Activated CD4-positive, alpha-beta T cell treated with anti-CD3 and anti-CD28 coated beads for 36 hours (primary cell): ENCODE measurements at regions of chr3 and their contacts with region 1.

Region 1: DNA sequence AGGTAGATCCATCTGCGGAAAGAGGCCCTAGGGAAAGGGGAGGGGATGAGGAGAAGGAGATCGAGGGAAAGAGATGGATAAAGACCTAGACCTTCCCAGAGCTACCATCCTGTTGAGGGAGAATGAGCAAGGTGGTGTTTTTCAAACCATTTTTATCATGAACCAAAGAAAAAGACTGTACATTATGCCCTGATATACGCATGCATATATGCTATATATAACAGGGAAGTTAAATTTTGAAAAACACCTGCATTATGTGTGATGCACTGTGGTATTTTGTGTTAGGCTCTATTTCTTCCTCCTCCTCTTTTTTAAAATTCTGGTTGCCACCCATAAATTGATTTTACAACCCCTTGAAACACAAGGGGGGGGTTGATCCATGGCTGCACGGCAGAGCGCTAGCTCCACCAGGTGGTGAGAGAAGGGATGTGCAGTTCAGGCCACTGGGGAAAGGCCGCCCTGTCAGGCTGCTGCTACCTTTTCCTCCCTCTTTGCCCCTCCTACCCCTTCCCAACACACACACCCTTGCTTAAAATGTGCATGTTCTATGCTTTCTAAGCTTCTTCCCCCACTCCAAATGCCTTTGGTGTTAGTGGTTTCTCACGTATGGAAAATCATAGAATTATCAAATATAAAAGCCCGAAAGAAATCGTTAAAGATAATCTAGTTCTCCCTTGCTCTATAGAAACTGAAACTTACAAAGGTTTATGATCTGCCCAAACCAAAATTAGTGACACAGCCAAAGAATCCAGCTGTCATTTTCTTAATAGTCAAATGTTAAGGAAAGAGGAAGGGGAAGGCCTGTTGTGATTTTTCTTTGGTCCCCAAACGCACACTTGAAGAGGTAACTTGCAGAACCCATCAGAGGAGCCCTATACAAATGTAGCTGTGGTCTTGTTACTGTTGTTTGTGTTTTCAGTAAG is 262.0 kb upstream of the UMPS start:
- DNase-seq: peak; percentile 61
- ATAC-seq: peak; percentile 53
- H3K4me3 Mint-ChIP-seq: no peak overlapping the region
- H3K27ac Mint-ChIP-seq: no peak overlapping the region
- H3K4me1 Mint-ChIP-seq: no peaks in the 10 kb centered on the region
- H3K27me3 Mint-ChIP-seq: peaks cover 20% of the 10 kb centered on the region

Region 2: DNA sequence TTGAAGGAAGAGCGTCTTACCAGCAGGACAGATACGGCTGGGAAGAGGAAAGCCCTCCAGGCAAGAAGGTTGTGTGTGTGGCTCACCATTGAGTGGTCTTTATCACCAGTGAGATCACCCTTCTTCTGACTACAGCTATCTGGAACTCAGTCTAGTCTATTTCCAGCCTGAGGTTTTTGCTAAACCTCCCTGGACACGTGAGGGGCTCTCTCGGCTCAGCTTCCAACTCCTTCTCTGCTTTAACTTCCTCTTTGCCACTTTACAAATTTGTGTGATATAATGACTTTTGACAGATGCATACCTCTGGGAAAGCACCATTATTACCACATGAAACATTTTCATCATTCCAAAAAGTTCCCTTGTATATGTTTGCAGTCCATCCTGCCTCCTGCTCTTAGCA is 461.1 kb before region 1 on chr3:
- CTCF ChIA-PET with region 1: no interaction called
- POLR2A ChIA-PET with region 1: no interaction called
- intact Hi-C with region 1: no loop called
- DNase-seq: no peak
- ATAC-seq: no peak
- H3K4me3 Mint-ChIP-seq: no peak overlapping the region
- H3K27ac Mint-ChIP-seq: no peak overlapping the region
- H3K4me1 Mint-ChIP-seq: no peaks in the 10 kb centered on the region
- H3K27me3 Mint-ChIP-seq: peaks cover 35% of the 10 kb centered on the region

Region 3: DNA sequence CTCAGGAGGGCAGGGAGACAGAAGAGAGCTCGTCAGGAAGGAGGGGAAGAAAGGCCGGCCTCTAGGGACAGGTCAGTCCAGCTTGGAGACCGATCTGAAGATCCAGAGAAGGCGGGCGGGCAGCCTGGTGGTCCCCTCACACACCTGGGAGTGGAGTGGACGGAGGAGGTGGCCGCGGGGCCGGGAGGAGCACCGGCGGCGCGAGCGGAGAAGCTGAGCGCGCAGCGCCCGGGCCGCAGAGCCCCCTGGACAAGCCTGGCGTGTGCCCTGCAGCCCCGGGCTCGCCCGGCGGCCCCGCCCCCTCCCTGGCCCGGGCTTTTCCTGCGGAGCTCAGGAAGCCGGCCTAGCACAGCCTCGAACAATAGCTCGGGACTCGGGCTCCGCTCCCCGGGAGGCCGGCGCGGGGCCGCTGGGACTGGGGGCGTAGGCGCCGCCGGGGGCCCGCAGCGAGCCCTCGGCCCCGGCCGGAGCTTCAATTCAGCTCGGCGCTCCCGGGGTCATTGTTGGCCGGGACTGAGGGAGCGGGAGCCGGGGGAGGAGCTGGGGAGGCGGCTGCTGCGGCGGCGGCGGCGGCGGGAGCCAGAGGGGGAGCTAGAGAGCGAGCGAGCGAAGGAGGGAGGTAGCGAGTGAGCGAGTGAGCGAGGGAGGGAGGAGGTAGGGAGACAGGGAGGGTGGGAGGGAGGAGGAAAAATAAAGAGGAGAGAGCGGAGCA is 435.4 kb before region 1 on chr3:
- CTCF ChIA-PET with region 1: no interaction called
- POLR2A ChIA-PET with region 1: no interaction called
- intact Hi-C with region 1: loop called in 1 of 2 experiments (anchors 10 kb)
- DNase-seq: peak; percentile 85
- ATAC-seq: peak; percentile 93
- H3K4me3 Mint-ChIP-seq: peak overlapping the region; percentile 54
- H3K27ac Mint-ChIP-seq: no peak overlapping the region
- H3K4me1 Mint-ChIP-seq: peaks cover 6% of the 10 kb centered on the region
- H3K27me3 Mint-ChIP-seq: peaks cover 47% of the 10 kb centered on the region

Region 4: DNA sequence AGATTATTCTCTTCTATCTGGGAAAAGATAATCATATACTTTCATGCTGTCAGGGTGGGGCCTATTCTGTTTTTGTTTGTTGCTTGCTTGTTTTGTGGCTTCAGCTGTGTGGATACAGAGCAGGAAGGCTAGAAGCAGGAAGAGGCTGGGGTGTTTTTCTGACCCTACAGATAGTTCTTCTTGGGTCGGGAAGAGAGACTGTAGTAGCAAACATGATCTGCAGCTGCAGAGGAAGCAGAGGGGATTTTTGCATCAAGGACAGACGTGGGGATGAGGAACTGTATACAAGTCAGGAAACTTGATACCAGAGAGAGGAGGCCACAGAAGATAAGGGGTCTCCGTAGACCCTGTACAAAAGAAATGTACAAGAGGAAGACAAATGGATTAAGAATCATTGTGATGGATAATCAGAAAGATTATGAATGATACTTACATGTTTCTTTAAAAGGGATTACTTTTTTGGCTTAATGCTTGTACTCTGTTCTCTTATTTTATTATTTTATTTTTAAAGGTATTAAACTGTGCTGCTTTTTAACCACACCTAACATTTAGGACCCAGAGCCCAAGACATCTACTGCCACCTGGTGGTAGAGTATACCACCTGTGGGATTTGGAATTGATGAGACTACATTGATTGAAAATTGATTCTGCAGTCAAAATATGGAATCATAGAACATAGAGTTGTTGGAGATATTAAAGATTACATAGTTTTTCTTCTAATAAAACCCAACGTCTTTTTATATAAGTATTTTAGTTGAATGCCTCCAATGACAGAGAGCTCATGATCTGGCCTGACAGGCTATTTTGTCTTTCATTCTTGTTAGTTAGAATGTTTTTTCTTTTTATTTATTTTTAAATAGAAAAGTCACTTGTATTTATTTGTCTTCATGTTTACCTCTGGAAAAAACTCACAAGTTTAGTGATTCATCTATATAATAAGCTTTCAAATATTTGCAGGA is 389.0 kb before region 1 on chr3:
- CTCF ChIA-PET with region 1: no interaction called
- POLR2A ChIA-PET with region 1: no interaction called
- intact Hi-C with region 1: loop called in 1 of 2 experiments (anchors 1 kb)
- DNase-seq: peak; percentile 28
- ATAC-seq: no peak
- H3K4me3 Mint-ChIP-seq: no peak overlapping the region
- H3K27ac Mint-ChIP-seq: no peak overlapping the region
- H3K4me1 Mint-ChIP-seq: no peaks in the 10 kb centered on the region
- H3K27me3 Mint-ChIP-seq: peaks cover 14% of the 10 kb centered on the region

Region 5: GRCh38 chr3:124351430-124352148 is 116.7 kb before region 1 on chr3:
- CTCF ChIA-PET with region 1: interaction called, 7 read pairs
- POLR2A ChIA-PET with region 1: no interaction called
- intact Hi-C with region 1: loop called (anchors 1 to 2 kb)
- DNase-seq: no peak
- ATAC-seq: no peak
- H3K4me3 Mint-ChIP-seq: no peak overlapping the region
- H3K27ac Mint-ChIP-seq: no peak overlapping the region
- H3K4me1 Mint-ChIP-seq: no peaks in the 10 kb centered on the region
- H3K27me3 Mint-ChIP-seq: peaks cover 12% of the 10 kb centered on the region

Region 6: DNA sequence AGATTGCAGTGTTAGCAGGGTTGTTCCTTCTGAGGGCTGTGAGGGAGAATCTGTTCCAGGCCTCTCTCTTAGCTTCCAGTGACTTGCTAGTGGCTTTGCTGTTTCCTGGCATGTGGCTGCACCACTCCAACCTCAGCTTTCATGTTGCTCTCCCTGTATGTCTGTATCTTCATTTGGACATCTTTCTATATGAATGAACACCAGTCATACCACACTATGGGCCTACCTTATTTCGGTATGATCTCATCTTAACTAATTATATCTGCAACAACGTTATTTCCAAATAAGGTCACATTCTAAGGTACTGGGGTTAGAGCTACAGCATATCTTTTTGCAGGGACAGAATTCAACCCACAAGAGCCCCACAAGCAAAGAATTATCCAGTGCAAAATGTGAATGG is 94.7 kb before region 1 on chr3:
- CTCF ChIA-PET with region 1: no interaction called
- POLR2A ChIA-PET with region 1: no interaction called
- intact Hi-C with region 1: no loop called
- DNase-seq: peak; percentile 24
- ATAC-seq: peak; percentile 74
- H3K4me3 Mint-ChIP-seq: no peak overlapping the region
- H3K27ac Mint-ChIP-seq: no peak overlapping the region
- H3K4me1 Mint-ChIP-seq: no peaks in the 10 kb centered on the region
- H3K27me3 Mint-ChIP-seq: peaks cover 3% of the 10 kb centered on the region

Region 7: GRCh38 chr3:124730129-124730940 is 262.1 kb after region 1 on chr3 and contains the start of gene UMPS:
- CTCF ChIA-PET with region 1: no interaction called
- POLR2A ChIA-PET with region 1: no interaction called
- intact Hi-C with region 1: no loop called
- DNase-seq: peak; percentile 97
- ATAC-seq: peak; percentile 99
- H3K4me3 Mint-ChIP-seq: peak within 1 kb of the TSS; percentile 100
- H3K27ac Mint-ChIP-seq: peak within 1 kb of the TSS; percentile 100
- H3K4me1 Mint-ChIP-seq: peaks cover 32% of the 10 kb centered on the region
- H3K27me3 Mint-ChIP-seq: peaks cover 7% of the 10 kb centered on the region
- total RNA-seq, gene UMPS: 35.9 to 42.4 TPM